Activated CD8-positive, alpha-beta T cell treated with anti-CD3 and anti-CD28 coated beads, Interleukin-2, amount 10 ng/mL, durations not matched to agents 7 days and 5 days (primary cell): ENCODE measurements at regions of chr2 and their contacts with region 1.

Region 1: DNA sequence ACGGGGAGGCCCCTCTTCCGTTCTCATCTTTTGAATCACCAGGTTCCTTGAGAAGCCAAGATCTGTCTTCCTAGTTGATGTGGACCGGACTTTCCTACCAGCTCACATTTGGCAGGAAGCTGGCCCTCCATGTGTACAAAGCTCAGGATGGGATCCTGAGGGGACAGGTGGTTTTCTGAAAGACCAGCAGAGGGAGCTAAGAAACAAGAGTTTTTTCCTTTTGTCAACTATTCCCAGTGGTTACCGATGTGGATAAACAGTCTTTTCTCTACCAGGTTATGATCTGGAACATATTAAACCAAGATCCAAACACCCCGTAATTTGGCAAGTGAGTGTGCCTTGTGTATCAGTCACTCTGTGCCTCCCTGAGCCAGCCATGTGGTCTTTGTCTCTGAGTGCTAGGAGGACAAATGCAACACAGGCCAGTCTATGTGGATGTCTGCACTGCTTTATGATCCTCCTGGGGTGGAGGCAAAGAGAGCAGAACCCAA is 25.1 kb upstream of the ARHGAP25 start:
- DNase-seq: peak; percentile 39
- ATAC-seq: peak; percentile 84
- H3K4me3 Mint-ChIP-seq: no peak overlapping the region
- H3K27ac Mint-ChIP-seq: peak overlapping the region; percentile 74
- H3K4me1 Mint-ChIP-seq: peaks cover 33% of the 10 kb centered on the region
- H3K27me3 Mint-ChIP-seq: peaks cover 9% of the 10 kb centered on the region

Region 2: DNA sequence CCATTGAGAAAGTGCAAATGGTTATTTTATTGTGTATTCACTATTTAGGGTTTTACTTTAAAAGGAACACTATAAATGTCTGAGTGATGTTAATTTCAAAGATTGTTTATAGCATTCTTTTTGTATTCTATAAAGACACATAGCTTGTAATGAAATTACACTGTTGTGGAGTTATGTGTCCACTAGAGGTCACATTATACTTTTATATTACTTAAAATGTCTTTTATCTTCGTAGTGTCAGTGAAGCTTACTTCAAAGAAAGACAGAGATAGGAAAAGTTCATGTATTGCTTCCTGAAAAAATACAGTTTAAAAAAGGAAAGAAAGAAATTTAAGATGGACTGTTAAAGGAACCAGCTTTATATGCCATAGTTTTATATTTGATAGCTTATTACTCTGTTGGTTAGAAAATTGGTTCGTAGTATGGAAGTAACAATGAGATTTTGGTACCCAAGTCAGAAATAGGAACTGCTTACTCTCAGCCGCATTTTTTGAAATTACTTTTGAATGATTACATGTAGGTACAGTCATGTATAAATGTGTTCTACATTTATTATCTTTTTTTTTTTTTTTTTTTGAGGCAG is 221.6 kb before region 1 on chr2:
- CTCF ChIA-PET with region 1: interaction called, 20 read pairs
- POLR2A ChIA-PET with region 1: no interaction called
- DNase-seq: no peak
- ATAC-seq: peak; percentile 49
- H3K4me3 Mint-ChIP-seq: no peak overlapping the region
- H3K27ac Mint-ChIP-seq: no peak overlapping the region
- H3K4me1 Mint-ChIP-seq: peaks cover 3% of the 10 kb centered on the region
- H3K27me3 Mint-ChIP-seq: no peaks in the 10 kb centered on the region

Region 3: DNA sequence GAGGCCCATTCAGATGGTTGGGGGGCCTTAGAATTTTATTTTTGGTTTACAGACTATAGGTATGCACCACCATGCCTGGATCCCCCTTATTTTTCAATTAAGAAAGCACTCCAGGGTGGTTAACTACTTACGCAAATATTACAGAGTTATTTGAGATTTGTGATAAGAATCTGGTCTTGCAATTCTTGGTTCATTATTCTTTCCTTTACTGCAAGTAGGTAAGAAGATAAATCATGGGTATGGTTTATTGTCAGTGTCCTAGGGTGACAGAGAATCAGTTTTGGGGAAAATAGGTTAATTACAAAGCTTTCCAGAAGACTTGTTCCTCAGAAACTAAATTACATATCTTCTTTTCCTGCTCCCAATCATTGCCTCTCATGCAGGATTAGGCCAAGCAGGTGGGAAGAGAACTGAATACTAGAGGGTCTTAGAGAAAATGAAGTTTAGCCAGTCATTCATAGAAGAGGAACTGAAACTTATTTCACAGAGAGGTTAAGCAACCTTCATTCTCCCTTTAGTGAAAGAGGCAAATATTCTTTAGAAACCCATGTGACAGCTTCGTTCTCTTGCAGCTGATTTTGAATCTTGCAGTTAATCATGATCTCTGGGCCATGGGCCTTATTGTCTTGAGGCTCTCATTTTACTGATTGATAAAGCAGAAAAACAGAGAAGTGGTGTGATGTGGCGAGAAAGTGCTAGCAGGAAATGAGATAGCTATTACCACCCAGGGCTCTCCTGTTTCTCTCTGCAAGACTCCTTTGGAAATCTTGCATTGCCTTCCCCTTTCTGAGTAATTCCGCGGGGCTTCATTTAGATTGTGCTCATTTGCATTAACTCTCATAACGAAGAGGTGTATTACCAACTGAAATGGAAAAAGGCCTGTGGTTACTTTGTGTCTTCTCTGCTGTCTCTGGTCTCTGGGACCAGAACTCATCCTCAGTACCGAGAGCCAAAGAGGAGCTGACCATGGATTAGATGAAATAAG is 19.6 kb before region 1 on chr2:
- CTCF ChIA-PET with region 1: interaction called, 18 read pairs
- POLR2A ChIA-PET with region 1: no interaction called
- DNase-seq: no peak
- ATAC-seq: peak; percentile 42
- H3K4me3 Mint-ChIP-seq: no peak overlapping the region
- H3K27ac Mint-ChIP-seq: peak overlapping the region; percentile 70
- H3K4me1 Mint-ChIP-seq: peaks cover 13% of the 10 kb centered on the region
- H3K27me3 Mint-ChIP-seq: peaks cover 6% of the 10 kb centered on the region

Region 4: DNA sequence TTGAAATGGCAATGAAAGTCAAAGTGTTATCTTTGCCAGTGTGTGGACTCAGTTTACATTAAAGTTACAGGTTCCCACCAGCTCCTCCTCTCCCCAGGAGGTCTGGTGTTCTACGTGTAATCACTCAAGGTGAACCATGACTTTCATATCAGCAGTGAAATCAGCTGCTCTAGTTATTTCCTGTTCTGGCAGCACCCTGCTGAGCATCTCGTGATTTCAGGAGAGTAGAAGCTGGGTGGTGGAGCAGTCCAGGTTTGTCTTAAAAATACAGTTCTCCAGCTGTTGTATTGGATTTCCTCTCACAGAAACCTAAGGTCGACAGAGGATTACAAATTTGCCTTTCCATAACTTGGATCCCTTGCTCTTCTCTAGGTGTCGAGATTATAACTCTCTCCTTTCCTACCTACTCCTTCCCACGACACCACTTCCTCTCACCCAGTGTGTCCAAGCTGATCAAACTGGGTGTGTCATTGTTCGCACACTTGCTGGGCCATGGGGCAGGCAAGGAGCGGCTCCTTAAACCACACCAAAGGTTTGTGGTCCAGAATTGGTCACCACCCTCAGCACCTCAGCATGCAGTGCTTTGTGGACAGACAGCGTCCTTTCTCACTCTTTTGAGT is 12.1 kb after region 1 on chr2:
- CTCF ChIA-PET with region 1: interaction called, 35 read pairs
- POLR2A ChIA-PET with region 1: interaction called, 3 read pairs
- DNase-seq: peak; percentile 68
- ATAC-seq: peak; percentile 72
- H3K4me3 Mint-ChIP-seq: peak overlapping the region; percentile 46
- H3K27ac Mint-ChIP-seq: peak overlapping the region; percentile 91
- H3K4me1 Mint-ChIP-seq: peaks cover 98% of the 10 kb centered on the region
- H3K27me3 Mint-ChIP-seq: no peaks in the 10 kb centered on the region

Region 5: GRCh38 chr2:68734688-68735525 is 25.4 kb after region 1 on chr2 and contains the start of gene ARHGAP25:
- CTCF ChIA-PET with region 1: interaction called, 449 read pairs
- POLR2A ChIA-PET with region 1: interaction called, 5 read pairs
- DNase-seq: peak; percentile 67
- ATAC-seq: peak; percentile 59
- H3K4me3 Mint-ChIP-seq: no peak within 1 kb of the TSS
- H3K27ac Mint-ChIP-seq: no peak within 1 kb of the TSS
- H3K4me1 Mint-ChIP-seq: peaks cover 35% of the 10 kb centered on the region
- H3K27me3 Mint-ChIP-seq: no peaks in the 10 kb centered on the region
- total RNA-seq, gene ARHGAP25: 68.2 to 68.7 TPM

Region 6: DNA sequence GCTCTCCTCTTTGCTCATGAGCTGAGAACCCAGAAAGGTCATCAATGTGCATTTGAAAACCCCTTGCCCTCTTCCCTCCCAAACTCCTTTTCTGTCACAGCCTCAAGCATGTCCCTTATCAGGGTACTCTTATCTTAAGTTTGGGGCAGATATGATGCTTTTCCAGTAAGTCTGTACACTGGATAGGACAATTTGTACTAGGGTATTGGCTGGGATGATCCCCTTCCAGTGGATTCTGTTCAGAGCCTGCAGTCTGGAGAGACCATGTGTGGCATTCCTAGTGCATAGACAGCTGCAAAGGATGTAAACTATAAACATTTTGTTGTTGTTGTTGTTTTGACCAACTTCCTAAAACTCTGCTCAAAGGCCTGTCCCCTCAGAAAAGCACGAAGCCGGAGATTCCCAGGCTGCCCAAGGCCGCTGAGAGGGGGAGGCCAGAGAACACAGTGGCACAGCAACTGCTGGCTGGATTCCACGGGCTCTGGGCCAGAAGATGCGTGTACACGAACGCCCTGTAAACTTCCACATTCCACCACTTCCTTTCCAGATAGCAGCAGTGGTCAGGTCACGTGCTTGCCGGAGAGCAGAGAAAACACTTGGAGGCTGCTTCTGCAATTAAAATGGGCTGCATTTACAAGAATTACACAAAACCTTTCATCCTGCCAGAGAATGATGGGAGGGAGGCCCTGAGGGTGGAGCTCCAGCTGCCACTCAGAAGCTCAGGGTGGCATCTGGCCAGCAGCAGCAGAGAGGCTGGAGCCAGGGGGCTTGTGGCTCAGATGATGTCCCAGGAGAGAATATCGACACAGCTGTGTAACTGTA is 119.6 kb after region 1 on chr2:
- CTCF ChIA-PET with region 1: interaction called, 13 read pairs
- POLR2A ChIA-PET with region 1: no interaction called
- DNase-seq: peak; percentile 83
- ATAC-seq: peak; percentile 70
- H3K4me3 Mint-ChIP-seq: peak overlapping the region; percentile 71
- H3K27ac Mint-ChIP-seq: peak overlapping the region; percentile 90
- H3K4me1 Mint-ChIP-seq: peaks cover 65% of the 10 kb centered on the region
- H3K27me3 Mint-ChIP-seq: no peaks in the 10 kb centered on the region

Region 7: DNA sequence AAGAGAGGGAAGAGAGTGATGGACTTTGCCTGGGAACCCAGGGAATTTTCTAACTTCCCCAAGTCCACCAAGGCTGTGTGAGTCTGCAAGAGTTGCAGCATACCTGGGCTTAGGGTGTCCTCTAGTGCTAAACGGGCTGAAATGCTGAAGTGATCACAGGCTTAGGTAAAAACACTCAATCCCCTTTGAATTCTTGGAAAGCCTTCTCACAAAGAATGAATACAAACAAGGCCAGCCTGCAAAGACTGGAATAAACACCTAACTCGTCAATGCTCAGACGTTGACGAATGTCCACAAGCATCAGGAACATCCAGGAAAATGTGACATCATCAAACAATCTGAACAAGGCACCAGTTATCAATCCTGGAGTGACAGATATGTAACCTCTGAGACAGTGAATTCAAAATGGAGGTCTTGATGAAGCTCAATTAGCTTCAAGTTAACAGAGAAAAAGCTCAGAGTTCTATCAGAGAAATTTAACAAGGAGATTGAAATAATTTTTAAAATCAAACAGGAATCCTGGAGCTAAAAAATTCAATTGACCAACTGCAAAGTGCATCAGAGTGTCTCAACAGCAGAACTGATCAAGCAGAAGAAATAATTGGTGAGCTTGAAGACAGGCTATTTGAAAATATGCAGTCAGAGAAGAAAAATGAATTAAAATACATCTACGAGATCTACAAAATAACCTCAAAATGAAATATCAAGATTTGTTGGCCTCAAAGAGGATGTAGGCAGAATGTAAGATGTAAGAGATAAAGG is 191.9 kb after region 1 on chr2:
- CTCF ChIA-PET with region 1: interaction called, 55 read pairs
- POLR2A ChIA-PET with region 1: no interaction called
- DNase-seq: no peak
- ATAC-seq: no peak
- H3K4me3 Mint-ChIP-seq: no peak overlapping the region
- H3K27ac Mint-ChIP-seq: no peak overlapping the region
- H3K4me1 Mint-ChIP-seq: no peaks in the 10 kb centered on the region
- H3K27me3 Mint-ChIP-seq: peaks cover 2% of the 10 kb centered on the region